Activated naive CD4-positive, alpha-beta T cell treated with anti-CD3 and anti-CD28 coated beads, Interleukin-2, amount 10 ng/mL, durations not matched to agents 7 days and 5 days (primary cell): ENCODE measurements at regions of chr4 and their contacts with region 1.

Region 1: GRCh38 chr4:114076899-114077570 is 97.6 kb upstream of the ARSJ start:
- DNase-seq: no peak
- H3K4me3 Mint-ChIP-seq: no peak overlapping the region
- H3K27ac Mint-ChIP-seq: no peak overlapping the region
- H3K4me1 Mint-ChIP-seq: no peaks in the 10 kb centered on the region
- H3K27me3 Mint-ChIP-seq: no peaks in the 10 kb centered on the region

Region 2: GRCh38 chr4:113394730-113395530 is 682.1 kb before region 1 on chr4:
- CTCF ChIA-PET with region 1: interaction called, 32 read pairs
- DNase-seq: peak; percentile 61
- H3K4me3 Mint-ChIP-seq: no peak overlapping the region
- H3K27ac Mint-ChIP-seq: no peak overlapping the region
- H3K4me1 Mint-ChIP-seq: no peaks in the 10 kb centered on the region
- H3K27me3 Mint-ChIP-seq: peaks cover 4% of the 10 kb centered on the region

Region 3: GRCh38 chr4:114040319-114041116 is 36.5 kb before region 1 on chr4:
- CTCF ChIA-PET with region 1: no interaction called
- DNase-seq: no peak
- H3K4me3 Mint-ChIP-seq: no peak overlapping the region
- H3K27ac Mint-ChIP-seq: no peak overlapping the region
- H3K4me1 Mint-ChIP-seq: peaks cover 8% of the 10 kb centered on the region
- H3K27me3 Mint-ChIP-seq: no peaks in the 10 kb centered on the region